CD4-positive, alpha-beta T cell (primary cell): ENCODE measurements at regions of chrX and their contacts with region 1.

Region 1: DNA sequence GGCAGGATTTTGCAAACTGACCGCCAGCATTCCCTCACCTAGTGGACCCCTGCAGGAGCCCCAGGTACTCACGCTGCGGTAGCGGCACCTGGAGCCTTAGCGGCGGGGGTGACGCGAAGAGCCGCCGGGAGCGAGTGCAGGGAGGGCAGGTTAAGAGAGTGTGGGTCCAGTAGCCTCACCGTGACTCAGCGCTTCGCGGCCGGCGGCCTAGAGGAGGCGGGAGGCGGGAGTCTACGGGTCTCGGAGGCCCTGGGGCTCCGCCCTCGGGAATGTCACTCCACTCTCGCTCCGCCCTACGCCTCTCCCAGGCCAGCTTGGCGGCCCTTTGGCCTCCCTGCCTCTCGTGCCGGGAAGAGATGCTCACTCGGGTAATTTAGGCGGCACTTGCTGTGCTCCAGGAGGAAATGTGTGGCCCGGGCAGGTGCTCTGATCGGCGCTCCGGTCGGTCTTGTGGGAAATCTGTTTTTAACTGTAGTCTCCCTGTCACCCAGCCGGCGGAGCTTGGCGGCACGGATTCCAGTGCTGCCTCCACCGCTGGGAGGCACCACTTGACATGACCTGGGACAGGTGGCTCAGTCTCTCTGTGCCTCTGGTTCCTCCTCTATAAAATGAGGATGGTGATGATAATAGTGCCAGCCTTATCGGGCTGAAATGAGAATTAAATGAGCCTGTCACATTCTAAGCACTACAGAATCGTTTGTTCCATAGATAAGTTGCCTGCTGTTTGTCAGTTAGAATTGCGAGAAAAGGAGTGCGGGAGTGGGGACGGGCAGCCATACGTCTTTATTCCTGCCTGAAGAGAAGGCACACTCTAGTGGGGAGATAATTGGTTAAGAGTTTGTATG is at the start of gene PIR:
- DNase-seq: peak in 11 of 14 experiments; percentile 1 to 59 (median 22)
- ATAC-seq: peak; percentile 67
- H3K4me3 ChIP-seq: peak within 1 kb of the TSS; percentile 56
- H3K4me3 Mint-ChIP-seq: peak within 1 kb of the TSS; percentile 84
- H3K27ac ChIP-seq: no peak within 1 kb of the TSS
- H3K27ac Mint-ChIP-seq: no peak within 1 kb of the TSS
- H3K4me1 ChIP-seq: peaks cover 9% of the 10 kb centered on the region
- H3K4me1 Mint-ChIP-seq: no peaks in the 10 kb centered on the region
- H3K27me3 ChIP-seq: peaks cover 0 to 8% of the 10 kb centered on the region in 2 experiments
- H3K27me3 Mint-ChIP-seq: peaks cover 5% of the 10 kb centered on the region
- CTCF ChIP-seq: no peak
- total RNA-seq, gene PIR: not detected

Region 2: GRCh38 chrX:15524417-15524816 is 31.1 kb after region 1 on chrX:
- CTCF ChIA-PET with region 1: no interaction called
- POLR2A ChIA-PET with region 1: no interaction called
- intact Hi-C with region 1: no loop called
- DNase-seq: no peak
- ATAC-seq: no peak
- H3K4me3 ChIP-seq: no peak overlapping the region
- H3K4me3 Mint-ChIP-seq: no peak overlapping the region
- H3K27ac ChIP-seq: no peak overlapping the region
- H3K27ac Mint-ChIP-seq: no peak overlapping the region
- H3K4me1 ChIP-seq: no peaks in the 10 kb centered on the region
- H3K4me1 Mint-ChIP-seq: no peaks in the 10 kb centered on the region
- H3K27me3 ChIP-seq: peaks cover 0 to 4% of the 10 kb centered on the region in 2 experiments
- H3K27me3 Mint-ChIP-seq: peaks cover 4% of the 10 kb centered on the region
- CTCF ChIP-seq: no peak

Region 3: DNA sequence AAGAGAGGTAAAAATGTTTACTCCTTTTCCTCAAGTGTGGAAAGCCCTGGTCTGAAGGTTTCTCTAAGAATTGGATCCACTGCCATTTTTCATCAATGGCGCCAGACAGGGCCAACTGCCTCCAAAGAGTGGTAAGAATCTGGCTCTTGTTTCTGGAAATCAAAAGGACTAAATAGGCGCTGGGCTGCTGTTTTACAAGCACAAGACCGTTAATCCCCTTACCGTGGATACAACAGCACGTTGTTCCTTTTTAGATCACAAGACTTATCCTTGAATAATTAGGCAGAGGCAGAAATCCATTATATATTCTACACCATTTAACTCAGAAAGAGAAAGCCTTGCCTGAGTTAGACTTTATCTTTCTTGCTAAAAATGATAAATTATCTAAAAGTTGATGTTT is 160.6 kb after region 1 on chrX:
- CTCF ChIA-PET with region 1: no interaction called
- POLR2A ChIA-PET with region 1: no interaction called
- intact Hi-C with region 1: loop called in 1 of 2 experiments (anchors 10 kb)
- DNase-seq: no peak
- ATAC-seq: no peak
- H3K4me3 ChIP-seq: no peak overlapping the region
- H3K4me3 Mint-ChIP-seq: no peak overlapping the region
- H3K27ac ChIP-seq: no peak overlapping the region
- H3K27ac Mint-ChIP-seq: no peak overlapping the region
- H3K4me1 ChIP-seq: no peaks in the 10 kb centered on the region
- H3K4me1 Mint-ChIP-seq: no peaks in the 10 kb centered on the region
- H3K27me3 ChIP-seq: no peaks in the 10 kb centered on the region
- H3K27me3 Mint-ChIP-seq: no peaks in the 10 kb centered on the region
- CTCF ChIP-seq: no peak

Region 4: GRCh38 chrX:15973299-15973698 is 480.0 kb after region 1 on chrX:
- CTCF ChIA-PET with region 1: no interaction called
- POLR2A ChIA-PET with region 1: no interaction called
- intact Hi-C with region 1: loop called in 1 of 2 experiments (anchors 10 kb)
- DNase-seq: peak in 5 of 14 experiments; percentile 1 to 35 (median 25)
- ATAC-seq: peak; percentile 44
- H3K4me3 ChIP-seq: no peak overlapping the region
- H3K4me3 Mint-ChIP-seq: no peak overlapping the region
- H3K27ac ChIP-seq: no peak overlapping the region
- H3K27ac Mint-ChIP-seq: no peak overlapping the region
- H3K4me1 ChIP-seq: no peaks in the 10 kb centered on the region
- H3K4me1 Mint-ChIP-seq: no peaks in the 10 kb centered on the region
- H3K27me3 ChIP-seq: no peaks in the 10 kb centered on the region
- H3K27me3 Mint-ChIP-seq: no peaks in the 10 kb centered on the region
- CTCF ChIP-seq: no peak

Region 5: GRCh38 chrX:16445166-16445752 is 951.9 kb after region 1 on chrX:
- CTCF ChIA-PET with region 1: no interaction called
- POLR2A ChIA-PET with region 1: no interaction called
- intact Hi-C with region 1: loop called (anchors 10 kb)
- DNase-seq: peak; percentile 1 to 61 (median 22)
- ATAC-seq: peak; percentile 55
- H3K4me3 ChIP-seq: no peak overlapping the region
- H3K4me3 Mint-ChIP-seq: no peak overlapping the region
- H3K27ac ChIP-seq: no peak overlapping the region
- H3K27ac Mint-ChIP-seq: no peak overlapping the region
- H3K4me1 ChIP-seq: peaks cover 3% of the 10 kb centered on the region
- H3K4me1 Mint-ChIP-seq: peaks cover 15% of the 10 kb centered on the region
- H3K27me3 ChIP-seq: no peaks in the 10 kb centered on the region
- H3K27me3 Mint-ChIP-seq: no peaks in the 10 kb centered on the region
- CTCF ChIP-seq: peak; percentile 65

Region 6: DNA sequence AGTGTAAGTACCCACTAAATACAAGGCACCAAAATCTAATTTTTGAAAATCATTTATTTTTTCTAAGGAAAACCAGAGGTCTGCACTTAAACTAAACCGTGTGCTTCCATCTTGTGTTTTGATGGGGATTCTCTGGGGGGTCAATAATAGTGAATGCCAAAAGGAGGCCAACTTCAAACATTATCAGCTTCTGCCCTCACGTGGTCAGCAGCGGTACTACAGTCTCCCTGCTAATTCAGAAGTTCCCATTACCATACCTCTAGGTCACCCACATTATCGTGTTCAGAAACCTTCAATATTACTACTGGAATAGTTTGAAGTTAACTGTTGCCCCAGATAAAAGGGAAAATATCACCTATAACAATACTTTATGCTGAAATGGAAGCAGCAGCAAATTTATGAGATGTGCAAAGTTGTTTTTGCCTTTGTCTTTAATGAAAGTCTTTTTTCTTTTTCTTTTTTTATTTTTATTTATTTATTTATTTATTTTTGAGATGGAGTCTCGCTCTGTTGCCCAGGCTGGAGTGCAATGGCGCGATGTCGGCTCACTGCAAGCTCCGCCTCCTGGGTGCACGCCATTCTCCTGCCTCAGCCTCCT is 1201.8 kb after region 1 on chrX:
- CTCF ChIA-PET with region 1: no interaction called
- POLR2A ChIA-PET with region 1: no interaction called
- intact Hi-C with region 1: loop called in 1 of 2 experiments (anchors 10 kb)
- DNase-seq: peak; percentile 19 to 78 (median 55)
- ATAC-seq: peak; percentile 74
- H3K4me3 ChIP-seq: no peak overlapping the region
- H3K4me3 Mint-ChIP-seq: no peak overlapping the region
- H3K27ac ChIP-seq: no peak overlapping the region
- H3K27ac Mint-ChIP-seq: no peak overlapping the region
- H3K4me1 ChIP-seq: no peaks in the 10 kb centered on the region
- H3K4me1 Mint-ChIP-seq: no peaks in the 10 kb centered on the region
- H3K27me3 ChIP-seq: no peaks in the 10 kb centered on the region
- H3K27me3 Mint-ChIP-seq: no peaks in the 10 kb centered on the region
- CTCF ChIP-seq: peak; percentile 71